GM12878 (cell line): ENCODE measurements at regions of chr7 and their contacts with region 1.

Region 1: GRCh38 chr7:51430480-51431086 is 114.0 kb upstream of the COBL start:
- DNase-seq: peak; percentile 5
- ATAC-seq: peak; percentile 69
- H3K4me3 ChIP-seq: no peak overlapping the region
- H3K27ac ChIP-seq: no peak overlapping the region
- H3K4me1 ChIP-seq: no peaks in the 10 kb centered on the region
- H3K27me3 ChIP-seq: no peaks in the 10 kb centered on the region
- CTCF ChIP-seq: peak; percentile 65 to 78 (median 66)
- EP300 ChIP-seq: no peak
- POLR2A ChIP-seq: no peak
- RAD21 ChIP-seq: peak; percentile 89

Region 2: DNA sequence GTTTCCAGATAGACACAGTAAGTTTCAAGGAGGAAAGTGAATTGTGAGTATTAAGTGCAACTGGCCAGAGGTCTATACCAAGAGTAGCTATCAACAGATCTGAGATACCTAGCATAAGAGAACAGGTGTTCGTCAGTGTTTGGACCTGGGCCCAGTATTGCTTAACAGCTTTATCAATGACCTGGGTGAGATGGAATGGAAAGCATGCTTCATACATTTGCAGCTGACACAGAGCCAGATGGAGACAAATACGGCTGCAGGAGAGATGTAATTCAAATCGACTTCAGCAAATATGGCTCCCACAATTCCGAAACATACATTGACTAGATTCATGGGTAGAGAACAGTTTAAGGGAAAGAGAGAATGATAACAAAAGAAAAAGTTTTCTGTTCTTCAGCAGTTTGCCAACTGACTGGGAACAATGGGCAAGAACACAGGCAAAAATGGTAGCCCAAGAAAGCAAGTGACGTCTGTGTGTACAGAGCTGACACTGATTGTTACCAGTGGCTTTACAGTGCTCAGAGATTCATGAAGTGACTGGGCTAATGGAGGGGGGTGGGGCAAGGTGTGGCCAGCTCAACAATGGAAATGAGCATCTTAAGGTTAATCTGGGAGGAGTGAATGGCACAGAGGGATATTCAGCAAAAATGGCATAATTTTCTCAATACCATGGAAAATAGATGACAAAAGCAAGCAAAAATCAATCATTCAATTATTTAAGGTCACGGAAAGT is 86.0 kb before region 1 on chr7:
- CTCF ChIA-PET with region 1: no interaction called
- POLR2A ChIA-PET with region 1: no interaction called
- RAD21 ChIA-PET with region 1: no interaction called
- SMC1A ChIA-PET with region 1: no interaction called
- in situ Hi-C with region 1: no loop called
- intact Hi-C with region 1: no loop called
- DNase-seq: no peak
- ATAC-seq: no peak
- H3K4me3 ChIP-seq: no peak overlapping the region
- H3K27ac ChIP-seq: no peak overlapping the region
- H3K4me1 ChIP-seq: no peaks in the 10 kb centered on the region
- H3K27me3 ChIP-seq: no peaks in the 10 kb centered on the region
- CTCF ChIP-seq: no peak
- EP300 ChIP-seq: no peak
- POLR2A ChIP-seq: no peak
- RAD21 ChIP-seq: no peak

Region 3: DNA sequence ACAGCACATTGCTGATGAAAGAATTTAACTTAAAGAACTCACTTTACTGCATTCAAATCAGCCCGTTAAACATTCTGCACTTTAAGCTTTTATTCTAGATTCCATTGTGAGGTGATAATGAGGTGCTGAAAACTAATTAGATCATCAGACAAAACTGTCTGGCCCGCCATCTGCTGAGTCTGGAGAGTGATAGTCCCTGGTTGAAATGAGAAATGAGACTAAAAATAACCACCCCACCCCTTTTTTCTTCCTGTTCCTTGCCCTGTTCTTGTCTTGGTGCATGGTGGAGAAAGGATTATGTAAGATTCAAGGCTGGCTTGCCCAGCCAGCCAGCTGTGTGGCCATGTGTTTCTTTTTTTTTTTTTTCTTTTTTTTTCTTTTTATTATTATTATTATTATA is 163.0 kb after region 1 on chr7:
- CTCF ChIA-PET with region 1: no interaction called
- POLR2A ChIA-PET with region 1: no interaction called
- RAD21 ChIA-PET with region 1: no interaction called
- SMC1A ChIA-PET with region 1: no interaction called
- in situ Hi-C with region 1: no loop called
- intact Hi-C with region 1: no loop called
- DNase-seq: no peak
- ATAC-seq: no peak
- H3K4me3 ChIP-seq: no peak overlapping the region
- H3K27ac ChIP-seq: no peak overlapping the region
- H3K4me1 ChIP-seq: no peaks in the 10 kb centered on the region
- H3K27me3 ChIP-seq: no peaks in the 10 kb centered on the region
- CTCF ChIP-seq: no peak
- EP300 ChIP-seq: no peak
- POLR2A ChIP-seq: no peak
- RAD21 ChIP-seq: no peak

Region 4: DNA sequence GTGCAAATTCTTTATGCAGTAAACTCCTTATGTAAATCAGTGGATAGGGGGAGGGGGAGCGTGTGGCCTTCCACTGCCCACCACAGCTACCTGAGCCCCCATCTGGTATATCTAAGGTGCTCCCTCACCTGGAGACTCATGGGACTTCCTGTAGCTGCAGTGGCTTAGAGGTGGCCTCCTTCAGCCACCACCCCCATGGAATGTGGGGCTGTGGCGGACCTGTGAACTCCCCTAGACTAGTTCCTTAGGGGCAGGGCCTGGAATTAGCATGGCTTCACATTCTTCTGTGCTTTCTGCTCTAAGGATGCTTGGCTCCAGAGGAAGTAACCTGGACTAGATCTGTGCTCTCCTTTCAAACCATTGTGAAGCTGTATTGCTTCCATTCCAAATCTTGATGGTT is 436.5 kb after region 1 on chr7:
- CTCF ChIA-PET with region 1: no interaction called
- POLR2A ChIA-PET with region 1: no interaction called
- RAD21 ChIA-PET with region 1: no interaction called
- SMC1A ChIA-PET with region 1: no interaction called
- in situ Hi-C with region 1: no loop called
- intact Hi-C with region 1: loop called (anchors 1 kb)
- DNase-seq: no peak
- ATAC-seq: no peak
- H3K4me3 ChIP-seq: no peak overlapping the region
- H3K27ac ChIP-seq: no peak overlapping the region
- H3K4me1 ChIP-seq: no peaks in the 10 kb centered on the region
- H3K27me3 ChIP-seq: no peaks in the 10 kb centered on the region
- CTCF ChIP-seq: no peak
- EP300 ChIP-seq: no peak
- POLR2A ChIP-seq: no peak
- RAD21 ChIP-seq: no peak

Region 5: GRCh38 chr7:52917982-52918578 is 1487.5 kb after region 1 on chr7:
- CTCF ChIA-PET with region 1: no interaction called
- POLR2A ChIA-PET with region 1: no interaction called
- RAD21 ChIA-PET with region 1: no interaction called
- SMC1A ChIA-PET with region 1: no interaction called
- in situ Hi-C with region 1: no loop called
- intact Hi-C with region 1: loop called (anchors 5 kb)
- DNase-seq: no peak
- ATAC-seq: peak; percentile 41; the same call in 1 of the 3 replicates
- H3K4me3 ChIP-seq: no peak overlapping the region
- H3K27ac ChIP-seq: no peak overlapping the region
- H3K4me1 ChIP-seq: no peaks in the 10 kb centered on the region
- H3K27me3 ChIP-seq: no peaks in the 10 kb centered on the region
- CTCF ChIP-seq: peak; percentile 10 to 35 (median 21); a peak in 3 of 6 replicates
- EP300 ChIP-seq: no peak
- POLR2A ChIP-seq: no peak
- RAD21 ChIP-seq: peak; percentile 29; the same call in 1 of the 2 replicates